Calu3 (cell line): ENCODE measurements at regions of chr17 and their contacts with region 1.

Region 1: DNA sequence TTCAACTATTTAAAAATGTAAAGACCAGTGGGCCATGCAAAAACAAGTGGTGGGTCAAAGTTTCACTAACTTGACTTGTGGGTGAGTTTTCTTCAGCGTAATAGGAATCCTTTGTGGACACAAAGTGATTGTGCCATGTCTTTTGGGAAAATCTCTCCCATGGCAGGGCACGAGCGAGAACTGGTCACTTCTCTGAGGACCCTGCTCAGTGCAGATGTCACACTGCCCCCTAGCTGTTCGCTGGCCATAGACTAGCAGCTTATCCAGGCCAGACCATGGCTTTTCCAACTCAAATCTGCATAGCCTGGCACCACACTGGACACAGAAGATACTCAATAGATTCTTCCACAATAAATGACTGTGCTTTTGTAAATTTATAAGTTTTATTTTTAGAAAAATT is 306.0 kb upstream of the CCL2 start:
- DNase-seq: peak; percentile 13
- H3K4me3 Mint-ChIP-seq: no peak overlapping the region
- H3K27ac Mint-ChIP-seq: no peak overlapping the region
- H3K4me1 Mint-ChIP-seq: no peaks in the 10 kb centered on the region
- H3K27me3 Mint-ChIP-seq: peaks cover 51% of the 10 kb centered on the region
- CTCF ChIP-seq: no peak

Region 2: GRCh38 chr17:32596628-32597027 is 1352.5 kb before region 1 on chr17:
- CTCF ChIA-PET with region 1: no interaction called
- intact Hi-C with region 1: no loop called
- DNase-seq: no peak
- H3K4me3 Mint-ChIP-seq: no peak overlapping the region
- H3K27ac Mint-ChIP-seq: no peak overlapping the region
- H3K4me1 Mint-ChIP-seq: no peaks in the 10 kb centered on the region
- H3K27me3 Mint-ChIP-seq: no peaks in the 10 kb centered on the region
- CTCF ChIP-seq: no peak

Region 3: DNA sequence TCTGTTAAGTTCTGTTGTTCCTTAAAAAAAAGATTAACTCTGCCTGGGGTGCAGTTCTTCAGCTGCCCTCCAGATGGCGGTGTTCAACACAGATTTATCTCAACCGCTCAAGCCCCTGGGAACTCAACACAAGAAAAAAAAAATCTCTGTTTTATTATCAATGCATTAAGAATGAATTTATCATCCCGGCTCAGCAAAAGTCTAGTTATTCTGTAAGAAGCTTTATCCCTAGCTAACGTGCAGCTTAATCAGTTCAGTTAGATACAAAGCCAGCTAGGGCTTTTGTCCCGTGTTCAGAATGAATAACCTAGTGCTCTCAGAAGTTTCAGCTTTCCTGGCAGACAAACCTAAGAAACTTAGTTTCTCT is 169.9 kb before region 1 on chr17:
- CTCF ChIA-PET with region 1: no interaction called
- intact Hi-C with region 1: loop called (anchors 2 kb)
- DNase-seq: peak; percentile 48
- H3K4me3 Mint-ChIP-seq: no peak overlapping the region
- H3K27ac Mint-ChIP-seq: no peak overlapping the region
- H3K4me1 Mint-ChIP-seq: no peaks in the 10 kb centered on the region
- H3K27me3 Mint-ChIP-seq: peaks cover 76% of the 10 kb centered on the region
- CTCF ChIP-seq: peak; percentile 79